ENCODE measurements at regions of chr3 and their contacts with region 1.

Region 1: GRCh38 chr3:49673715-49674496 is at the start of gene APEH:
- DNase-seq: peak; percentile 99
- H3K4me3 Mint-ChIP-seq: peak within 1 kb of the TSS; percentile 94
- H3K27ac Mint-ChIP-seq: peak within 1 kb of the TSS; percentile 96
- H3K4me1 Mint-ChIP-seq: peaks cover 36% of the 10 kb centered on the region
- H3K27me3 Mint-ChIP-seq: no peaks in the 10 kb centered on the region
- total RNA-seq, gene APEH: 120 to 122 TPM

Region 2: DNA sequence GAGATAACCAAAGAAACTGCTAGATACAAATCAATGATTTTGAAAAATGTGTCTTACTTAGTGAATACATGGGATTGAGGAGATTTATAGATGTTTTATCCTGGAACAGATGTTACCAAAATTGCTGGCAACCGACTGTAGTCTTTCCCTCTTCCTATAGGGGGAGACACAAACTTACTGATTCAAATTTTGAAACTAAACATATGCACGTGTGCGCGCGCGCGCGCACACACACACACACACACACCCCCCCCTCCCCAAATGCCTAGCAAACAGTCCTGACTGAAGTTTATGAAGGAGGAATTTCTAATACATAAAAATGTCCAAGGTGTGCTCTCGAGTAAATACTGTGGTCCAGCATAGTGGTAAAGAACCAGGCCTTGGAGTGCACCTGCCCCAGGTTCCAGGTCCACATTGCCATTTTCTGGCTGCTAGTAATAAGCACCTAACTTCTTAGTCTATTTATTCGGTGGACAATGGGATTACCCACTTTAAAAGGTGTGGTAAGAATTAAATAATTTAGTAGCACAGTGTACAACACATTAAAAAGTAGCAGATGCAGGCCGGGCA is 378.3 kb before region 1 on chr3:
- CTCF ChIA-PET with region 1: no interaction called
- intact Hi-C with region 1: loop called (anchors 10 kb)
- DNase-seq: peak; percentile 51
- H3K4me3 Mint-ChIP-seq: no peak overlapping the region
- H3K27ac Mint-ChIP-seq: no peak overlapping the region
- H3K4me1 Mint-ChIP-seq: no peaks in the 10 kb centered on the region
- H3K27me3 Mint-ChIP-seq: no peaks in the 10 kb centered on the region

Region 3: DNA sequence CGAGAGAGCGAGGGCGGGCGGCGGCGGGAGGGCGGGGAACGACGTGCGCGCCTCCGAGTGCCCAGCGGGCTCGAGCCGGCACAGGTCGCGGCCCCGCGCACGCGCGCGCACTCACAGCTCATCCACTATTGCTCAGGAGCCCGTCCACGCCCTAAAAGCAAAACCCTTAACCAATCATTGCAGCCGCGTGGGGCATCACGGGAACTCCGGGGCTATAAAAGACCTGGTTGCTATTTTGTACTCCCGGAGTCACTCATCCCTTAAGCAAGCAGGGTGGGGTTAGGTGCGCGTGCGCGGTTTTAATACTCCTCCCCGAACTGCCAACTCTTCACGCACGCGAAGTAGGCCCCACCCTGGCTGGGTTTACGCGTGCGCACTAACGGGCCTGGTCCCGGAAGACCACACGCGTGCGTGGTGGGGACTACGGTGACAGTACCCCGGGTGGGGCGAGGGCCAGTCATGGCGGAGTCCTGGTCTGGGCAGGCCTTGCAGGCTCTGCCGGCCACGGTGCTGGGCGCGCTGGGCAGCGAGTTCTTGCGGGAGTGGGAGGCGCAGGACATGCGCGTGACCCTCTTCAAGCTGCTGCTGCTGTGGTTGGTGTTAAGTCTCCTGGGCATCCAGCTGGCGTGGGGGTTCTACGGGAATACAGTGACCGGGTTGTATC is 261.8 kb before region 1 on chr3 and contains the starts of genes RHOA and TCTA:
- CTCF ChIA-PET with region 1: no interaction called
- intact Hi-C with region 1: loop called (anchors 1 kb)
- DNase-seq: peak; percentile 99
- H3K4me3 Mint-ChIP-seq: peak within 1 kb of the TSS; percentile 94
- H3K27ac Mint-ChIP-seq: peak within 1 kb of the TSS; percentile 92
- H3K4me1 Mint-ChIP-seq: peaks cover 65% of the 10 kb centered on the region
- H3K27me3 Mint-ChIP-seq: no peaks in the 10 kb centered on the region
- total RNA-seq, gene RHOA: 463 to 491 TPM
- total RNA-seq, gene TCTA: 9.4 to 9.5 TPM

Region 4: GRCh38 chr3:49469936-49470713 is 203.8 kb before region 1 on chr3 and contains the start of gene DAG1:
- CTCF ChIA-PET with region 1: no interaction called
- intact Hi-C with region 1: loop called (anchors 1 kb)
- DNase-seq: peak; percentile 97
- H3K4me3 Mint-ChIP-seq: peak within 1 kb of the TSS; percentile 83
- H3K27ac Mint-ChIP-seq: peak within 1 kb of the TSS; percentile 85
- H3K4me1 Mint-ChIP-seq: peaks cover 14% of the 10 kb centered on the region
- H3K27me3 Mint-ChIP-seq: no peaks in the 10 kb centered on the region
- total RNA-seq, gene DAG1: 6.9 to 8.2 TPM

Region 5: DNA sequence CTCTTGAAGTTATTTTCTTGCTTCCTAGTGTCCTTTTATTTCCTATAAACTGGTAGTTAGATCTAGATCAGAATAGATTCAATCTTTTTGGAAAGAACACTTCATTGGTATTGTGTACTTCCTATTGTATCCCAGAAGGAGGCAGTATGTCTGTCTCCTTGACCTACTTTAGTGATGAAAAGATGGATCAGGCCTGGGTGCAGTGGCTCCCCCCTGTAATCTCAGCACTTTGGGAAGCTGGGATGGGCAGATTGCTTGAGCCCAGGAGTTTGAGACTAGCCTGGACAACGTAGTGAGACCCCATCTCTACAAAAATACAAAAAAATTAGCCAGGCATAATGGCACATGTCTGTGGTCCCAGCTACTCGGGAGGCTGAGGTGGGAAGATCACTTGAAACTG is 107.6 kb before region 1 on chr3:
- CTCF ChIA-PET with region 1: interaction called, 4 read pairs
- intact Hi-C with region 1: loop called (anchors 1 kb)
- DNase-seq: no peak
- H3K4me3 Mint-ChIP-seq: no peak overlapping the region
- H3K27ac Mint-ChIP-seq: no peak overlapping the region
- H3K4me1 Mint-ChIP-seq: no peaks in the 10 kb centered on the region
- H3K27me3 Mint-ChIP-seq: no peaks in the 10 kb centered on the region

Region 6: GRCh38 chr3:49689046-49689907 is 15.4 kb after region 1 on chr3 and contains the starts of genes MST1 and RNF123:
- CTCF ChIA-PET with region 1: no interaction called
- intact Hi-C with region 1: loop called (anchors 1 kb)
- DNase-seq: peak; percentile 93
- H3K4me3 Mint-ChIP-seq: peak within 1 kb of the TSS; percentile 97
- H3K27ac Mint-ChIP-seq: peak within 1 kb of the TSS; percentile 83
- H3K4me1 Mint-ChIP-seq: peaks cover 33% of the 10 kb centered on the region
- H3K27me3 Mint-ChIP-seq: peaks cover 4% of the 10 kb centered on the region
- total RNA-seq, gene MST1: 10.7 to 13.1 TPM
- total RNA-seq, gene RNF123: 20.3 to 21.5 TPM

Region 7: GRCh38 chr3:49786241-49786958 is 112.5 kb after region 1 on chr3 and contains the start of gene IP6K1:
- CTCF ChIA-PET with region 1: no interaction called
- intact Hi-C with region 1: loop called (anchors 1 kb)
- DNase-seq: peak; percentile 100
- H3K4me3 Mint-ChIP-seq: peak within 1 kb of the TSS; percentile 83
- H3K27ac Mint-ChIP-seq: peak within 1 kb of the TSS; percentile 86
- H3K4me1 Mint-ChIP-seq: peaks cover 30% of the 10 kb centered on the region
- H3K27me3 Mint-ChIP-seq: no peaks in the 10 kb centered on the region
- total RNA-seq, gene IP6K1: 18.3 to 20.3 TPM

Measured in activated naive CD4-positive, alpha-beta T cell treated with anti-CD3 and anti-CD28 coated beads for 36 hours (primary cell).